Activated CD8-positive, alpha-beta T cell treated with anti-CD3 and anti-CD28 coated beads for 36 hours (primary cell): ENCODE measurements at regions of chr15 and their contacts with region 1.

Region 1: DNA sequence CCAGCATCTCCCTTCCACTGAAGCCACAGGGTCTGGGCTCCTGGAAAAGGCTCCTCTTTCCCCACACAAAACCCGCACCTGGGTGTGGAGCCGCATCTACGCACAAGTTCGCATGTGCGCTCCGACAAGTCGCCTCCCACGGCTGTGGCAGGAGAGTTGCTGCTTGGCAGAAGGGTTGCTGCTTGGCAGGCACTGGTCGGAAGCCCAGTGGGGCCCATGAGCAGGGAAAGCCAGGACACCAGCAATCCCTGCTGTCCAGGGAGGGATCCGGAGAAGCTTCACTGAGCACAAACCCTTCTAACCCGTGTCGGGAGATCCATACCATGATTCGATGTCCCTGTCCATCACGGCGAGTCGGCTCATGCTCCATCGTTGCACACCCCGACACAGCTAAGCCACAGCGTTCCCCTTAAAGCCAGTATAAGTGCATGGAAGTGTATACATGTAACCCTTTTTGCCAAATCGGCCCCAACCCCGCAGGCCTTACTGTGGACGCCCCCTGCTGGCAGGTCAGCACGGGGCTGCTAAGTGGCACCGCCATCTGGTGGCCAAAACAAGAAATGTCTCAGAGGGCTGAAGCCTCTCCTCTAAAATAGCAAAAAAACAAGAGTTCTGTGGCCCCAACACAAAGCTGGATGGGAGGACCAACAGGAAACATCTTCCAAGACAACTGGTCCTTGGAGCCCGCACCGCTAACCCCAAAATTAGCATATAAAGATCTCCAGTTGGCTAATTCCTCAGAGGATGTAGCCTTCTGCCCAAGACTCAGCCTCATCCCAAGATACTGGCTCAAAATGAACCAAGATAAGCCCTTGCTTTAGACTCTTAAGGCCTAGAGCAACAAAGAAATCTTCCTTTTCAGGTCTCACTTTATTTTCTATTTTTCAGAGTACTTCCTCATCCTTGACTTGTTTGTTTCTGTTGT is 8.3 kb downstream of the ANKRD63 start:
- DNase-seq: peak; percentile 89
- ATAC-seq: peak; percentile 81
- H3K4me3 Mint-ChIP-seq: no peak overlapping the region
- H3K27ac Mint-ChIP-seq: no peak overlapping the region
- H3K4me1 Mint-ChIP-seq: no peaks in the 10 kb centered on the region
- H3K27me3 Mint-ChIP-seq: peaks cover 14% of the 10 kb centered on the region
- CTCF ChIP-seq: peak; percentile 100

Region 2: GRCh38 chr15:40038638-40039543 is 235.7 kb before region 1 on chr15 and contains the start of gene SRP14:
- CTCF ChIA-PET with region 1: interaction called, 68 read pairs
- POLR2A ChIA-PET with region 1: interaction called, 9 read pairs
- intact Hi-C with region 1: no loop called
- DNase-seq: peak; percentile 97
- ATAC-seq: peak; percentile 95
- H3K4me3 Mint-ChIP-seq: peak within 1 kb of the TSS; percentile 99
- H3K27ac Mint-ChIP-seq: peak within 1 kb of the TSS; percentile 94
- H3K4me1 Mint-ChIP-seq: peaks cover 54% of the 10 kb centered on the region
- H3K27me3 Mint-ChIP-seq: no peaks in the 10 kb centered on the region
- CTCF ChIP-seq: no peak
- total RNA-seq, gene SRP14: 147 to 152 TPM

Region 3: GRCh38 chr15:40108855-40109735 is 165.5 kb before region 1 on chr15 and contains the start of gene BMF:
- CTCF ChIA-PET with region 1: interaction called, 12 read pairs
- POLR2A ChIA-PET with region 1: no interaction called
- intact Hi-C with region 1: no loop called
- DNase-seq: peak; percentile 98
- ATAC-seq: peak; percentile 72
- H3K4me3 Mint-ChIP-seq: peak within 1 kb of the TSS; percentile 81
- H3K27ac Mint-ChIP-seq: peak within 1 kb of the TSS; percentile 58
- H3K4me1 Mint-ChIP-seq: peaks cover 50% of the 10 kb centered on the region
- H3K27me3 Mint-ChIP-seq: peaks cover 12% of the 10 kb centered on the region
- CTCF ChIP-seq: no peak
- total RNA-seq, gene BMF: 4.2 to 4.3 TPM

Region 4: DNA sequence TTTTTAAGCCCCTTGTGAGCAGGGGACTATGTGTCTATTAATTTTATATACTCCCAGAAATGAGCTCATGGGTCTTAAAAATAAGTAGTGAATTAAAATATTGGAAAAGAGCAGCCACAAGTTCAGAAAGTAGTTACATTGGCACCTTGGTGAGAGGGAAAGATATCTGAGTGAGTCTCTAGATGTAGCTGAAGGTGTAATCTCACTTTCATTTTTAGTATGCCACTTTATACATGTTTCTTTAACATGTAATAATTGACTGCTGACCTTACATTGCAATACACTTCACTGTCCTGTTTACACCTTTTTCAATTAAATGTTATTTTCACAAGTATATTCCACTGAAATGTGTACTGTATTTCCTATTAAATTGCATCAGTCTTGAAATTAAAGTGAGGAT is 47.9 kb before region 1 on chr15:
- CTCF ChIA-PET with region 1: interaction called, 30 read pairs
- POLR2A ChIA-PET with region 1: no interaction called
- intact Hi-C with region 1: no loop called
- DNase-seq: no peak
- ATAC-seq: peak; percentile 76
- H3K4me3 Mint-ChIP-seq: no peak overlapping the region
- H3K27ac Mint-ChIP-seq: peak overlapping the region; percentile 5
- H3K4me1 Mint-ChIP-seq: peaks cover 8% of the 10 kb centered on the region
- H3K27me3 Mint-ChIP-seq: no peaks in the 10 kb centered on the region
- CTCF ChIP-seq: no peak

Region 5: GRCh38 chr15:40244663-40245601 is 29.7 kb before region 1 on chr15:
- CTCF ChIA-PET with region 1: interaction called, 55 read pairs
- POLR2A ChIA-PET with region 1: no interaction called
- intact Hi-C with region 1: no loop called
- DNase-seq: no peak
- ATAC-seq: no peak
- H3K4me3 Mint-ChIP-seq: no peak overlapping the region
- H3K27ac Mint-ChIP-seq: no peak overlapping the region
- H3K4me1 Mint-ChIP-seq: no peaks in the 10 kb centered on the region
- H3K27me3 Mint-ChIP-seq: peaks cover under 1% of the 10 kb centered on the region
- CTCF ChIP-seq: no peak

Region 6: GRCh38 chr15:40307421-40308211 is 33.0 kb after region 1 on chr15 and contains the start of gene PLCB2:
- CTCF ChIA-PET with region 1: interaction called, 595 read pairs
- POLR2A ChIA-PET with region 1: interaction called, 22 read pairs
- intact Hi-C with region 1: loop called (anchors 1 kb)
- DNase-seq: peak; percentile 84
- ATAC-seq: peak; percentile 78
- H3K4me3 Mint-ChIP-seq: peak within 1 kb of the TSS; percentile 95
- H3K27ac Mint-ChIP-seq: peak within 1 kb of the TSS; percentile 97
- H3K4me1 Mint-ChIP-seq: peaks cover 36% of the 10 kb centered on the region
- H3K27me3 Mint-ChIP-seq: no peaks in the 10 kb centered on the region
- CTCF ChIP-seq: peak; percentile 35
- total RNA-seq, gene PLCB2: 44.6 to 58.8 TPM

Region 7: GRCh38 chr15:40357723-40358470 is 83.3 kb after region 1 on chr15 and contains the start of gene DISP2:
- CTCF ChIA-PET with region 1: interaction called, 11 read pairs
- POLR2A ChIA-PET with region 1: no interaction called
- intact Hi-C with region 1: no loop called
- DNase-seq: peak; percentile 87
- ATAC-seq: peak; percentile 94
- H3K4me3 Mint-ChIP-seq: peak within 1 kb of the TSS; percentile 71
- H3K27ac Mint-ChIP-seq: no peak within 1 kb of the TSS
- H3K4me1 Mint-ChIP-seq: peaks cover 7% of the 10 kb centered on the region
- H3K27me3 Mint-ChIP-seq: no peaks in the 10 kb centered on the region
- CTCF ChIP-seq: no peak
- total RNA-seq, gene DISP2: 0.09 to 0.20 TPM